CD4-positive, alpha-beta T cell (primary cell): ENCODE measurements at regions of chr5 and their contacts with region 1.

Region 1: DNA sequence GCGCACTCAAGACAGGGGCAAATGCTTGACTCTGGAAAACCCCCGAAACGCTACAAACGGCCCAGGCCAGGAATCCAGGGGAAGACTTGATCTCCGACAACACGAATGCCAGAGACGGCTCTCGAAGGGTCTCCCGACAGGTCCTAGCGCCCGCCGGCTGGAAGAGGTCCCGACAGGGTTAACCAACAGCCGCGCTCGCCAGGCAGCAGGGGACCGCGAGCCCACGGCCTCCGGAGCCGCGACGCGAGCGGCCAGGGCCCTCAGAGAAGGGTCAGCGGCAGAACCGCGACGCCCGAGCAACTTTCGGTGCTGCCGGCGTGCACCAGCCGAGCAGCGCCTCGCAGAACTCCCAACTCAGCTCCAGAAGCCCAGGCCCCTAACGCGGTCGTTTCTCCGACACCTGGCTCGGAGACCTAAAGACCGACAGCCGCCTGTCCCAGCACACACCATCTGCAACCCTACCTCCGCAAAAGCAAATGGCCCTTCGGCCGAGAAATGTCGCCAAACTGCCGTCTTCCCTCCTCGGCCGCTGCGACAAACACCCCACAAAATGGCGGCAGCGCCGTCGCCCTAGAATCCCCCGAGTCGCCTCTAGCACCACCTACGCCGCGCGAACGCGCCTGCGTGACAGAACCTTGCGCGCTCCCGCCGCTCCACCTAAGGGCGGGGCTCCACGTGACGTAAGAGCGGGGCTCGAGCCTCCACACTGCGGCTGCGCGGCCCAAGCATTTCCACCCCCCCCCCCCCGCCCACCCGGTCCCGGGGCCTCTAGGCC is at the start of gene CLK4:
- DNase-seq: peak; percentile 94 to 98 (median 96)
- ATAC-seq: peak; percentile 81
- H3K4me3 ChIP-seq: peak within 1 kb of the TSS; percentile 87
- H3K4me3 Mint-ChIP-seq: peak within 1 kb of the TSS; percentile 95
- H3K27ac ChIP-seq: peak within 1 kb of the TSS; percentile 95 to 99
- H3K27ac Mint-ChIP-seq: peak within 1 kb of the TSS; percentile 96
- H3K4me1 ChIP-seq: peaks cover 23% of the 10 kb centered on the region
- H3K4me1 Mint-ChIP-seq: peaks cover 48% of the 10 kb centered on the region
- H3K27me3 ChIP-seq: no peaks in the 10 kb centered on the region
- H3K27me3 Mint-ChIP-seq: no peaks in the 10 kb centered on the region
- CTCF ChIP-seq: no peak
- total RNA-seq, gene CLK4: 109 to 123 TPM

Region 2: GRCh38 chr5:177133091-177133852 is 1493.4 kb before region 1 on chr5 and contains the start of gene NSD1:
- CTCF ChIA-PET with region 1: no interaction called
- POLR2A ChIA-PET with region 1: no interaction called
- intact Hi-C with region 1: loop called in 1 of 2 experiments (anchors 5 kb)
- DNase-seq: peak; percentile 83 to 97 (median 90)
- ATAC-seq: peak; percentile 71
- H3K4me3 ChIP-seq: peak within 1 kb of the TSS; percentile 65
- H3K4me3 Mint-ChIP-seq: peak within 1 kb of the TSS; percentile 90
- H3K27ac ChIP-seq: peak within 1 kb of the TSS; percentile 71 to 76
- H3K27ac Mint-ChIP-seq: peak within 1 kb of the TSS; percentile 97
- H3K4me1 ChIP-seq: peaks cover 54% of the 10 kb centered on the region
- H3K4me1 Mint-ChIP-seq: peaks cover 67% of the 10 kb centered on the region
- H3K27me3 ChIP-seq: no peaks in the 10 kb centered on the region
- H3K27me3 Mint-ChIP-seq: no peaks in the 10 kb centered on the region
- CTCF ChIP-seq: no peak
- total RNA-seq, gene NSD1: 87.6 to 93.3 TPM

Region 3: DNA sequence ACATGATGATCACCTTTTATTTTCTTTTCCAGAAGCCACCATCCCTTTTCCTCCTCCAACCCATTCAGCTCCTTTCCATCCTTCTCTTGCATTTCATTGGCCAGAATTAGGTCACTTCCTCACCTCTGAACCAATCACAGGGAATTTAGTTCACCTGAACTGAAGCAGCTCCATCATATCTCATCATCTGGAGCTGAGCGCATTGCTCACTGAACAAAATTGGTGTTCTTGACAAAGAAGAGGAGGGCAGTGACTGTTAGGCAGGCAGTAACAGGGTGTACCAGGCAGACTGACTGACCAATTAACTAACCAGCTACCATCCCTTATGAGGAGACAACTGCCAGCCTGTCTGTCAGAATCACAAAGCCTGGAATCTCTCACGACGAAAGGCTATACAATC is 105.6 kb after region 1 on chr5:
- CTCF ChIA-PET with region 1: interaction called, 6 read pairs
- POLR2A ChIA-PET with region 1: interaction called, 13 read pairs
- intact Hi-C with region 1: loop called (anchors 1 to 2 kb)
- DNase-seq: no peak
- ATAC-seq: no peak
- H3K4me3 ChIP-seq: no peak overlapping the region
- H3K4me3 Mint-ChIP-seq: peak overlapping the region; percentile 48
- H3K27ac ChIP-seq: no peak overlapping the region
- H3K27ac Mint-ChIP-seq: no peak overlapping the region
- H3K4me1 ChIP-seq: peaks cover 14% of the 10 kb centered on the region
- H3K4me1 Mint-ChIP-seq: peaks cover 8% of the 10 kb centered on the region
- H3K27me3 ChIP-seq: no peaks in the 10 kb centered on the region
- H3K27me3 Mint-ChIP-seq: no peaks in the 10 kb centered on the region
- CTCF ChIP-seq: no peak

Region 4: DNA sequence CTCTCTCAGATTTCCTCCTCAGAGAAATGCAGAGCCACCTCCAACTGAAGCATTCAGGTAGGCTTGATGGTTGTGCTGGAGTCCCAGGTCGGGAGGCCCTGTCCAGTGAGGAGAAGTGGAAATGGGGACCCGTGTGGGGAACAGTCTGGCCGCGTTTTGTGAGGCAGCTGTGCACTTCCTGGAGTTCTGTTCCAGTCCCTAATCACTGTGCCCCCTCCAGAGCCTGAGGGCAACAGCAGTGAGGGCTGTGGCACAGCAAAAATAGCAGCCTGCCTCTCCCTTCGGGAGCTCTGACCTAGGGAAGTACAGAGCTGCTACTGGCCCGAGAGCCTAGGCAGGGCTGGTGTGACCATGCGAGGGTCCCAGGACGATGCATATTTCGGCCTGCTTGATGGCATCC is 249.5 kb after region 1 on chr5:
- CTCF ChIA-PET with region 1: no interaction called
- POLR2A ChIA-PET with region 1: no interaction called
- intact Hi-C with region 1: no loop called
- DNase-seq: no peak
- ATAC-seq: no peak
- H3K4me3 ChIP-seq: no peak overlapping the region
- H3K4me3 Mint-ChIP-seq: no peak overlapping the region
- H3K27ac ChIP-seq: no peak overlapping the region
- H3K27ac Mint-ChIP-seq: no peak overlapping the region
- H3K4me1 ChIP-seq: no peaks in the 10 kb centered on the region
- H3K4me1 Mint-ChIP-seq: peaks cover 8% of the 10 kb centered on the region
- H3K27me3 ChIP-seq: no peaks in the 10 kb centered on the region
- H3K27me3 Mint-ChIP-seq: no peaks in the 10 kb centered on the region
- CTCF ChIP-seq: no peak

Region 5: DNA sequence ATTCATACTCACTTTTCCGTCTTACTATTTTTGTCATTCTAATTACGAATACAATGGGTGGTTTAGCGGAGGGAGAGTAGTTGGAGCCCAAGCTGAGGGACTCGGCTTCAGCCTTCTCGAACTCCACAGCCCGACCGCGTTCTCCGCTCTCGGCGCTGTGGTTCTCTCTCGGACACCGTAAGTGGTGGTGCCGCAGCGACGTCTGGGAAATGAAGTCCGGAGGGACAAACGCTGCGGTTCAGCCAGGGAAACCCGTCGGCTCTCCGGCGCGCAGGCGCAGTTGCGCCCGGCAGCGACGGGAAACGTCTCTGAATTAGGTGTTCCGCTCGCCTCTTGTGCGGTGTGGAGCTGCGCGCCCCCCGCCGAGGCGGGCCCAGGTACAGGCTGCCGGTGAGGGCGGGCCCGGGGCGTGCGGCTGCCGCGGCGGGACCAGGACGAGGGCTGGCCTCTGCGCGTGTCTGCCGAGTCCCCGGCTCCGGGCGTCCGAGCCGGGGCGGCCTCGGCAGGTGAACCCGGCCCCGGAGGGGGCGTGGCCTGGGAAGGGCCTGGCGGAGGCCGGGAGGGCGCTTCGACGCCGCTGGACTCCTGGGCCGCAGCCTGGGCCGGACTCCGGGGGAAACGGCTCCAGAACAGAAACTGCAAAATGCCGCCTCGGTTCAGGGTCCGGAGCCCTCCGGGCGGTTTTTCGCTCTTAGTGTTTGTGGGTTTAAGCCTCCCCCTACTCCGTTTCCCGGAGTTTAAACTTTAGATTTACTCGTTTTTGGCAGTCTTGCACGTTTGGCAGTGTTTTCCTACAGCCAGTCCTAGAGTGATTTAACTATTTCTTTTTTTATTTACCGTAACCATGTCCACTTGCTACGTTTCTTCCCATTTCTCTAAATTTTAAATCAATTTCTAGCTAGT is 397.1 kb after region 1 on chr5 and contains the start of gene ZNF879:
- CTCF ChIA-PET with region 1: no interaction called
- POLR2A ChIA-PET with region 1: no interaction called
- intact Hi-C with region 1: loop called in 1 of 2 experiments (anchors 2 kb)
- DNase-seq: peak; percentile 90 to 97 (median 94)
- ATAC-seq: peak; percentile 94
- H3K4me3 ChIP-seq: peak within 1 kb of the TSS; percentile 64
- H3K4me3 Mint-ChIP-seq: peak within 1 kb of the TSS; percentile 95
- H3K27ac ChIP-seq: no peak within 1 kb of the TSS
- H3K27ac Mint-ChIP-seq: peak within 1 kb of the TSS; percentile 83
- H3K4me1 ChIP-seq: peaks cover 22% of the 10 kb centered on the region
- H3K4me1 Mint-ChIP-seq: peaks cover 16% of the 10 kb centered on the region
- H3K27me3 ChIP-seq: no peaks in the 10 kb centered on the region
- H3K27me3 Mint-ChIP-seq: peaks cover 4% of the 10 kb centered on the region
- CTCF ChIP-seq: no peak
- total RNA-seq, gene ZNF879: 4.9 to 5.1 TPM

Region 6: GRCh38 chr5:179559284-179560252 is 932.9 kb after region 1 on chr5:
- CTCF ChIA-PET with region 1: no interaction called
- POLR2A ChIA-PET with region 1: interaction called, 3 read pairs
- intact Hi-C with region 1: loop called in 1 of 2 experiments (anchors 10 kb)
- DNase-seq: peak; percentile 65 to 95 (median 84)
- ATAC-seq: peak; percentile 99
- H3K4me3 ChIP-seq: peak overlapping the region; percentile 60
- H3K4me3 Mint-ChIP-seq: peak overlapping the region; percentile 90
- H3K27ac ChIP-seq: peak overlapping the region; percentile 4 to 16
- H3K27ac Mint-ChIP-seq: peak overlapping the region; percentile 89
- H3K4me1 ChIP-seq: peaks cover 10% of the 10 kb centered on the region
- H3K4me1 Mint-ChIP-seq: peaks cover 28% of the 10 kb centered on the region
- H3K27me3 ChIP-seq: no peaks in the 10 kb centered on the region
- H3K27me3 Mint-ChIP-seq: no peaks in the 10 kb centered on the region
- CTCF ChIP-seq: no peak

Region 7: DNA sequence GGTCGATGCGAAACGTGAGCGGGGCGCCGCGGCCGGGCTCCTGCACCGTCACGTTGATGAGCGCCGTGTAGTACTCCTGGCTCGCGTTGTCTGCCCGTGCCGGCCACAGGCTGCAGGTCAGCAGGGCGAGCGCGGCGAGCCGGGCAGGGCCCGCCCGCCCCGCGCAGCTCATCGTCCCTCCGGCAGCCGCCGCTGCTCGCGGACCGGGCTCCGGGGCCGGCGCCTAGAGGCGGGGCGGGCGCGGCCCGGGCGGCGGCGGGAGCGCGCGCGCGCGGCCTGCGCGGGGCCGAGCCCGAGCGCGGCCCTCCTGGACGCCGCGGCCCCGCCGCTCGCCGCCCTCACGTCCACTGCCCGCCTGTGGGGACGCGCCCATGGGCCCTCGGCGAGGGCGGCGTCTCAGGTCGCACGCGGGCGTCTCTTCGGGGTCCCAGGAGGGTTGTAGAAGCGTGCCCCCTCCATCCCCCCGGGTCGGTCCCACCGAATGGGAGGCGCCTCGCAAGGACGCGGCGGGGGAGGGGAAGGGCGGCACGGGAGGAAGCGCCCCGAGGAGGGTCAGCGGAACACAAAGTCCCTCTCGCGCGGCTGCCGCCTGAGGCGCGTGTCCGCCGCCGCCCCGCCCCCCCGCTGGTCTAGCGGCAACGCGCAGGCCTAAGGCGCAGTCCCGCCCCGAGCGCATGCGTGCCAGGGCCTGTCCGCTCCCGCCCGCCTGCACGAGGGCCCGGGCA is 1445.0 kb after region 1 on chr5 and contains the start of gene RNF130:
- CTCF ChIA-PET with region 1: no interaction called
- POLR2A ChIA-PET with region 1: no interaction called
- intact Hi-C with region 1: loop called in 1 of 2 experiments (anchors 5 kb)
- DNase-seq: peak; percentile 61 to 92 (median 81)
- ATAC-seq: peak; percentile 66
- H3K4me3 ChIP-seq: peak within 1 kb of the TSS; percentile 65
- H3K4me3 Mint-ChIP-seq: peak within 1 kb of the TSS; percentile 89
- H3K27ac ChIP-seq: peak within 1 kb of the TSS in 1 of 2 donors; percentile 62
- H3K27ac Mint-ChIP-seq: peak within 1 kb of the TSS; percentile 80
- H3K4me1 ChIP-seq: peaks cover 22% of the 10 kb centered on the region
- H3K4me1 Mint-ChIP-seq: peaks cover 38% of the 10 kb centered on the region
- H3K27me3 ChIP-seq: no peaks in the 10 kb centered on the region
- H3K27me3 Mint-ChIP-seq: no peaks in the 10 kb centered on the region
- CTCF ChIP-seq: no peak
- total RNA-seq, gene RNF130: 18.2 to 19.1 TPM